ENCODE measurements at regions of chr7 and their contacts with region 1.

Region 1: GRCh38 chr7:105522062-105522936 is at the start of gene PUS7:
- DNase-seq: peak; percentile 37
- ATAC-seq: peak; percentile 93
- H3K4me3 ChIP-seq: peak within 1 kb of the TSS; percentile 94
- H3K27ac ChIP-seq: peak within 1 kb of the TSS; percentile 46
- H3K4me1 ChIP-seq: peaks cover 7% of the 10 kb centered on the region; the same call in 1 of the 2 replicates
- H3K27me3 ChIP-seq: no peaks in the 10 kb centered on the region; a peak in 1 of 4 replicates
- CTCF ChIP-seq: no peak
- EP300 ChIP-seq: no peak
- POLR2A ChIP-seq: peak; percentile 84
- RAD21 ChIP-seq: no peak
- polyA plus RNA-seq, gene PUS7: 5.6 to 6.7 TPM

Region 2: GRCh38 chr7:104650991-104651640 is 871.2 kb before region 1 on chr7:
- CTCF ChIA-PET with region 1: no interaction called
- POLR2A ChIA-PET with region 1: no interaction called
- RAD21 ChIA-PET with region 1: no interaction called
- SMC1A ChIA-PET with region 1: no interaction called
- in situ Hi-C with region 1: no loop called
- intact Hi-C with region 1: loop called (anchors 10 kb)
- DNase-seq: no peak
- ATAC-seq: no peak
- H3K4me3 ChIP-seq: no peak overlapping the region
- H3K27ac ChIP-seq: no peak overlapping the region
- H3K4me1 ChIP-seq: no peaks in the 10 kb centered on the region
- H3K27me3 ChIP-seq: peaks cover 0 to 4% of the 10 kb centered on the region in 2 experiments; a peak in 2 of 4 replicates
- CTCF ChIP-seq: no peak
- EP300 ChIP-seq: no peak
- POLR2A ChIP-seq: no peak
- RAD21 ChIP-seq: no peak

Measured in GM12878 (cell line).